ENCODE measurements at regions of chr3 and their contacts with region 1.

Region 1: DNA sequence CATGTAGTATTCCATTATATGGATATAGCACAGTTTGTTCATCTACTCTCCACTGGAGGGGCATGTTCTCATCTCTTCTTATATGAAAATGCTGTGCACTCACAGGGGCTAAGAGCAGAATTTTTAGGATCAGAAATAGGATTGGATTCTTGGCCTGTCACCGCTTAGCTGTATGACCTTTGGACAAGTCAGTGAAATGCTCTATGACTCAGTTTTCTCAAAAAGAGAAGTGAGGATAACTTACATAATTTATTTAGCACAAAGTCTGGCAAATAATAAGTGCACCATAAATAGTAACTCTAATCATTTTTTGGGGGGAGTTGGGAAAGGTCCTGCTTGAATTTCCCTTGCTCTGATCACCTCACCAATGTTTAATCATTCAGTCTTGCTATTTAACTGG is 103.7 kb upstream of the LRIG1 start:
- DNase-seq: no peak
- H3K4me3 ChIP-seq: no peak overlapping the region
- H3K27ac ChIP-seq: no peak overlapping the region
- H3K4me1 ChIP-seq: no peaks in the 10 kb centered on the region
- H3K27me3 ChIP-seq: no peaks in the 10 kb centered on the region
- CTCF ChIP-seq: no peak
- POLR2A ChIP-seq: no peak

Region 2: DNA sequence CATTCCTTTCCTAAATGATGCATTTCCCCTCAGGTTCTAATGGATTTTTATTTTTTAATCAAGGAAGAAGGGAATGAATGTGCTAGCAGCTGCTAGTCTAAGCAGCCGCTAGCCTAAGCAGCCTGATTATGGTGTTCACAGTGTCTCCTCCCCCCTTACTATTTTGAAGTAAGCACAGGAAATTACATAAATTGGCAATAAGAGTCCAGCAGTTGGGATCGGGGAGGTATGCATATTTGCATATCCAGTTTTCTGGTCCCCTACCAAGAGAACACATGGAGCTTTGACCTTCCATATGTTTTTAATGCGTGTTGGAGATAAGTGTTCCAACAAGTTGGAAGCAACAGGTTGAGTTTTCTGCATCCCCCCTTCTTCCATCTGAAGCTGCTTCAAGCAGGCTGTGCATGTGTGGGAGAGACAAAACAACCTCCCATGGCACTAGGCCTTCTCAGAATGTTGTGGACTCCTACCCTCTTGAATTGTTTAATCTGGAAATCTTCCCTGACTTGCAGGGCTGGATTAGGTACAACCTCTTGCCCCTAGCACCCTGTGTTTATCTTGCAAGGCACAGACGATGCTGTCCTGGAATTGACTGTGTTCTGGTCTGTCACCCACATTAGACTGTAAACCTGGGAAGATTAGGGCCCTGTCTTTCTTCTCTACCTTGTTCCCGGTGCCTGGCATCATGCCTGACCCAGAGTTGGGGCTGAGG is 21.2 kb after region 1 on chr3:
- intact Hi-C with region 1: loop called (anchors 2 kb)
- DNase-seq: no peak
- H3K4me3 ChIP-seq: no peak overlapping the region
- H3K27ac ChIP-seq: no peak overlapping the region
- H3K4me1 ChIP-seq: no peaks in the 10 kb centered on the region
- H3K27me3 ChIP-seq: no peaks in the 10 kb centered on the region
- CTCF ChIP-seq: no peak
- POLR2A ChIP-seq: no peak

Region 3: DNA sequence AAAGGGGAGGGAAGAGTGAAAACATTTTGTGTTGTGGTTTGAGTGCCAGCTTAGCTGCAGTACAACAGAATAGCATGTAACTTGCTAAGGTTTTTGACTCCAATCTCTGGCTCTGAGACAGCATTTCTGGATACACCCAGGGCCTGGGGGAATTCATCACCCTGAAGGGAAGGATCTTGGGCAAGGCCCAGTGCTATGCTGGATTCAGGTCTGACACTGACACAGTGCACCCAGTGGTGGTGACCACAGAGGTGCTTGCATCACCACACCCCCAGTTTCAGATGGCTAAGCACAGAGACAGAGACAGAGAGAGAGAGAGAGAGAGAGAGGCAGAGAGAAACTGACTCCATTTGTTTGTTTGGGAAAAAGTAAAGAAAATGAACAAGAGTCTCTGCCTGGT is 319.5 kb after region 1 on chr3:
- intact Hi-C with region 1: no loop called
- DNase-seq: no peak
- H3K4me3 ChIP-seq: no peak overlapping the region
- H3K27ac ChIP-seq: no peak overlapping the region
- H3K4me1 ChIP-seq: no peaks in the 10 kb centered on the region
- H3K27me3 ChIP-seq: no peaks in the 10 kb centered on the region
- CTCF ChIP-seq: no peak
- POLR2A ChIP-seq: no peak

Measured in breast epithelium (tissue), 4 donors.